Activated CD4-positive, alpha-beta T cell treated with anti-CD3 and anti-CD28 coated beads, Interleukin-2, amount 10 ng/mL, durations not matched to agents 24 days and 14 days (primary cell): ENCODE measurements at regions of chr4 and their contacts with region 1.

Region 1: DNA sequence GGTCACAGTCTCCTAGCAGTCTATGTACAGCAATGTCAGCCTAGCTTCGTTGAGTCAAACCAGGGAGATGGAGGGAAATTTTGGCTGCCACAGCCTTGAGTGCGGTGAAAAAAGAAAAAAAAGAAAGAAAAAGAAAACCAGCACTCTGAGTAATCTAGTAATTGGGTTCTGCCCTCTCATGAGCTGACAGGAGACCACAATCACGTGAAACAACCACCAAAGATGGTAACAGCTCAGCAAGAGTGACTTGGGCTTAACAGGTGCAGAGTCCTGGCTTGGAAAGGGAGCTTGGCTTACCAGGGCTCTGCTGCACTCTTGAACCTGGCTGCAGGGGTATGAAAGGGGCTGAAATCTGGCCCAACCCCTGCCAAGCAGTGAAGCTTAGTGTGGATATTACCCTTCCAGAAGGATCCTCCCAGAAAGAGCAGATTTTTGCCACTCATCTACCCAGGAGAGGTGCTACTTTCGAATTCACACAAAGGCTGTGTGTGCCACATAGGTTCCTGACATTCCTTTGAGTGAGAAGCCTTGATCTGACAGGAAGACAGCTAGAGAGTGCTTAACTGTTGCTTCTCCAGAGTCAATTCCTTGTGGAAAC is 350.3 kb downstream of the PTTG2 start:
- DNase-seq: peak; percentile 94
- H3K4me3 Mint-ChIP-seq: peak overlapping the region; percentile 66
- H3K27ac Mint-ChIP-seq: peak overlapping the region; percentile 83
- H3K4me1 Mint-ChIP-seq: peaks cover 49% of the 10 kb centered on the region
- H3K27me3 Mint-ChIP-seq: peaks cover 47% of the 10 kb centered on the region

Region 2: GRCh38 chr4:37891260-37892159 is 419.0 kb before region 1 on chr4:
- intact Hi-C with region 1: loop called (anchors 5 kb)
- DNase-seq: peak; percentile 90
- H3K4me3 Mint-ChIP-seq: peak overlapping the region; percentile 90
- H3K27ac Mint-ChIP-seq: peak overlapping the region; percentile 95
- H3K4me1 Mint-ChIP-seq: peaks cover 42% of the 10 kb centered on the region
- H3K27me3 Mint-ChIP-seq: peaks cover 2% of the 10 kb centered on the region

Region 3: DNA sequence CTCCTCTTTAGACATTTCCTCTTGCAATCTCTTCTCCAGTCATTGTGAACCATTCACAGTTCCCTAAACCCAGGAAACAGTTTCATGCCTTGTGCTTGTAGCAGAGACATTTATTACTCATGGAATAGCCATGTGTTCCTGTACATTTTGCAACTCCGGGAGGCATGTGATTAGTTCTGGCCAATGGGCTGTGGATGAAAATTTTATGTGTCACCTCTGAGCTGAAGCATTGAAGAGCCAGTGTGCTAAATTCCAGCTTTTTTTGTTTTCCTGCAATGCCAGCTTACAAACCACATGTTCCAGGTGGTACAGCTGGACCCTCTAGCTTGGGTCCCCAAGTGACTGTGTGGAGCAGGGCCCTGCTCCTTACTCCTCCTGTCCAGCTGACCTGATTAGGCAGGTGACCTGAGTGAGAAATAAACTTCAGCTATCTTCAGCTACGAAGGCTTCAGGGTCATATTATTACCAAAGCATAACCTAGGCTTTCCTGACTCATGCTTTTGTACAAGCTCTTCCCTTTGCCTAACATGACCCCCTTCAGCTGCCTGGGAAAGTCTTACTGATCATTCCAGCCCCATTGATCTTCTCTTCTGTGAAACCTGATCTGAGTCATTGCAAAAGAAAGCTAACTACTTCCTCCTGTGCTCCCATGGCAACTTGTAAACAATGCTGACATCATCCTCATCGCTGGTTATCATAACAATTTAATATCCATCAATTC is 149.9 kb before region 1 on chr4:
- intact Hi-C with region 1: loop called (anchors 2 kb)
- DNase-seq: peak; percentile 88
- H3K4me3 Mint-ChIP-seq: peak overlapping the region; percentile 5
- H3K27ac Mint-ChIP-seq: peak overlapping the region; percentile 84
- H3K4me1 Mint-ChIP-seq: peaks cover 59% of the 10 kb centered on the region
- H3K27me3 Mint-ChIP-seq: peaks cover 7% of the 10 kb centered on the region

Region 4: GRCh38 chr4:38324861-38325628 is 14.5 kb after region 1 on chr4:
- intact Hi-C with region 1: no loop called
- DNase-seq: peak; percentile 50
- H3K4me3 Mint-ChIP-seq: no peak overlapping the region
- H3K27ac Mint-ChIP-seq: no peak overlapping the region
- H3K4me1 Mint-ChIP-seq: peaks cover 22% of the 10 kb centered on the region
- H3K27me3 Mint-ChIP-seq: peaks cover 17% of the 10 kb centered on the region

Region 5: GRCh38 chr4:38455092-38455862 is 144.7 kb after region 1 on chr4:
- intact Hi-C with region 1: loop called (anchors 2 kb)
- DNase-seq: peak; percentile 62
- H3K4me3 Mint-ChIP-seq: peak overlapping the region; percentile 21
- H3K27ac Mint-ChIP-seq: peak overlapping the region; percentile 67
- H3K4me1 Mint-ChIP-seq: peaks cover 32% of the 10 kb centered on the region
- H3K27me3 Mint-ChIP-seq: peaks cover 16% of the 10 kb centered on the region

Region 6: GRCh38 chr4:38730830-38731646 is 420.5 kb after region 1 on chr4:
- intact Hi-C with region 1: loop called (anchors 2 kb)
- DNase-seq: peak; percentile 94
- H3K4me3 Mint-ChIP-seq: no peak overlapping the region
- H3K27ac Mint-ChIP-seq: no peak overlapping the region
- H3K4me1 Mint-ChIP-seq: peaks cover 9% of the 10 kb centered on the region
- H3K27me3 Mint-ChIP-seq: peaks cover 17% of the 10 kb centered on the region

Region 7: DNA sequence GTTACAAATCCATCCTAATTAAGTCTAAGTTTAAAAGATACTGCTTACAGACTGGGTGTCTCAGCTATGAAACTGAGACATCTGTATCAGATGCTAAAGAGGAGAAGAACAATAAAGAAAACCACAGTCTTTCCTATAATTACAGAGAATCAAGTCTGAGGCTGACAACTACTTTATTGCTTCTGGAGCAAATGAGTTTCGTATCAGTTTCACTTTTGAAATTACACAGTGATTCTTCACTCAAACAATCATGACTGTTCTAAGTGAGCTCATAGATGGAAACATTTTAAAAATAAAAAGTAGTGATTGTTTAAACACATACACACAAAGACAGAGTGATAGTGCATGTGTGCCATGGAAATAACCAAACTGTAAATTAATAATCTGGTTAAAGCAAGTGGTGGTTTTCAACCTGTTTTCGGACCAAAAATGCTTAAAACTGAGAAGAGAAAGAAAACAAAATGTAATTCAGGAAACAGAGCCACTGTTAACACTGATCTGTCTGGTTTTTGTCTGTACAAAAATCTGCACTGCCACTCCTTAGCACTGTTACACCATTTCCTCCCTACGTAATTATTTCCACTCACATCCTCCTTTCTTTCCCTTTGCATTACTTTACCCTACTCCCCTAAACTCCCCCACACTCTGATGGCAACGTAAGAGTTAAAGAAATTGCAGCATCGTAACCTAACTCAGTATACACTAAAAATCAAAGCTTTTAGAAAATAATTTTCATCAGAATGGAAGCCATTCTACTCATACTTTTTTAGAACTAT is 1043.1 kb after region 1 on chr4:
- intact Hi-C with region 1: loop called (anchors 5 kb)
- DNase-seq: peak; percentile 82
- H3K4me3 Mint-ChIP-seq: peak overlapping the region; percentile 78
- H3K27ac Mint-ChIP-seq: peak overlapping the region; percentile 92
- H3K4me1 Mint-ChIP-seq: peaks cover 53% of the 10 kb centered on the region
- H3K27me3 Mint-ChIP-seq: no peaks in the 10 kb centered on the region